Calu3 (cell line): ENCODE measurements at regions of chr1 and their contacts with region 1.

Region 1: DNA sequence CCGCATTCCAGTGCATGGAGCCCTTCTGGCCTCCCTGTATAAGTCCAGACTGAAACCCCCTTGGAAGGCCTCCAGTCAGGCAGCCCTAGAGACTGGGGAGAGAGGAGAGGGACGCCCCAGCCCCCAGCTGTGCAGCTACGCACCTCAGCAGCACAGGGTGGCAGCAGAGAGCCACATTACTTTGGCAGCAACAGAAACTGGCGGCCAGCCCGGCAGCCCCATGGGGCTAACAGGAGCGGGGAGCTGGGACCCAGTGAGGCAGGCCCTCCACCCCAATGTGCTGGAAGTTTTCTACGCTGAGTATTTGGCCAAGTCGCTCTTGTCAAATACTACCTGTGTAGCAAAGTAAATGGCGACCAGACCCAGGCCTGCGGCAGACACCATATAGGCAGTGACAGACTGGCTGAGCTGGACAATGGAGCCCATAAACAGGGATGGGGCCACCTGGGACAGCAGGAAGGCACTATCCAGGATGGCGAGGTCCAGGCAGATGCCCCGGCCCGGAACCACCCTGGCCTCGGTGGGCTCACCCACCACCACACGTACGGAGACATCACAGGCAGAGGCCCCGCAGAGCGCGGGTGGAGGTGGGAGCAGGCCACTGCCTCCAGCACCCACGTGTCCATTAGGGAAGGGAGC is 21.2 kb downstream of the SLC45A3 start:
- DNase-seq: peak; percentile 89
- H3K4me3 Mint-ChIP-seq: no peak overlapping the region
- H3K27ac Mint-ChIP-seq: no peak overlapping the region
- H3K4me1 Mint-ChIP-seq: peaks cover 35% of the 10 kb centered on the region
- H3K27me3 Mint-ChIP-seq: no peaks in the 10 kb centered on the region
- CTCF ChIP-seq: peak; percentile 82

Region 2: DNA sequence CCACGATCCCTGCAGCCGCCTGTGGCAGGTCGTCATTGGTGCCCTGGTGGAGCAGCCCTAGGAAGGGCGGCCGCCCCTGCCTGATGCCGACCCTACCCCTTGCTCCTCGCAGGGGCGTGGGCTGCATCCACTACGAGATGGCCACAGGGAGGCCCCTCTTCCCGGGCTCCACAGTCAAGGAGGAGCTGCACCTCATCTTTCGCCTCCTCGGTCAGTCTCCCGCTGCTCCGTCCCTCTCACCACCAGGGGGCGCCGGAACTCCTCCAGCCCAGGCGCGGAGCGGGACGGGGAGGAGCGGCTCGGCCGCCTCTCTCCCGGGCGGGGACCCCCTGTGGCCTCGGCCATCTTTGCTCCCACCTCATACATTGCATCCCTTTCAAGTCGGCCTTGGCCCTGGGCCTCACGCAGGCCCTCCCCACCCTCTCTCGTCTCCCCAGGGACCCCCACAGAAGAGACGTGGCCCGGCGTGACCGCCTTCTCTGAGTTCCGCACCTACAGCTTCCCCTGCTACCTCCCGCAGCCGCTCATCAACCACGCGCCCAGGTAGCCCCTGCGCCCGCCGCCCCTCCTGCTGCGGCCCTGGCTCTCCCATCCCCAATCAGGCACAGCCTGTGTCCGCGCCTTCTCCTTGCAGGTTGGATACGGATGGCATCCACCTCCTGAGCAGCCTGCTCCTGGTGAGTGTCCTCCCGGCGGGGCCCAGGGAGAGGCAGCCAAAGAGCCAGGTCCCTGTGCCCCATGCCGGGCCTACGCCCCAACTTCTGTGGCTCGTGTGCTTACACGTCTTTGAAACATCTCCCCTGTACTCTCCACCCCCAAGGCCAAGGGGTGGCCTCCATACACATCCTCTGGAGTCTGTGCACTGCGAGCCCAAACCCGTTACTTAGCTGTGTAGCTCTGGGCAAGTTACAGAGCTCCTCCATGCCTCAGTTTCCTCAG is 129.9 kb before region 1 on chr1:
- CTCF ChIA-PET with region 1: interaction called, 35 read pairs
- intact Hi-C with region 1: loop called (anchors 1 kb)
- DNase-seq: peak; percentile 95
- H3K4me3 Mint-ChIP-seq: peak overlapping the region; percentile 23
- H3K27ac Mint-ChIP-seq: peak overlapping the region; percentile 17
- H3K4me1 Mint-ChIP-seq: no peaks in the 10 kb centered on the region
- H3K27me3 Mint-ChIP-seq: no peaks in the 10 kb centered on the region
- CTCF ChIP-seq: peak; percentile 98

Region 3: DNA sequence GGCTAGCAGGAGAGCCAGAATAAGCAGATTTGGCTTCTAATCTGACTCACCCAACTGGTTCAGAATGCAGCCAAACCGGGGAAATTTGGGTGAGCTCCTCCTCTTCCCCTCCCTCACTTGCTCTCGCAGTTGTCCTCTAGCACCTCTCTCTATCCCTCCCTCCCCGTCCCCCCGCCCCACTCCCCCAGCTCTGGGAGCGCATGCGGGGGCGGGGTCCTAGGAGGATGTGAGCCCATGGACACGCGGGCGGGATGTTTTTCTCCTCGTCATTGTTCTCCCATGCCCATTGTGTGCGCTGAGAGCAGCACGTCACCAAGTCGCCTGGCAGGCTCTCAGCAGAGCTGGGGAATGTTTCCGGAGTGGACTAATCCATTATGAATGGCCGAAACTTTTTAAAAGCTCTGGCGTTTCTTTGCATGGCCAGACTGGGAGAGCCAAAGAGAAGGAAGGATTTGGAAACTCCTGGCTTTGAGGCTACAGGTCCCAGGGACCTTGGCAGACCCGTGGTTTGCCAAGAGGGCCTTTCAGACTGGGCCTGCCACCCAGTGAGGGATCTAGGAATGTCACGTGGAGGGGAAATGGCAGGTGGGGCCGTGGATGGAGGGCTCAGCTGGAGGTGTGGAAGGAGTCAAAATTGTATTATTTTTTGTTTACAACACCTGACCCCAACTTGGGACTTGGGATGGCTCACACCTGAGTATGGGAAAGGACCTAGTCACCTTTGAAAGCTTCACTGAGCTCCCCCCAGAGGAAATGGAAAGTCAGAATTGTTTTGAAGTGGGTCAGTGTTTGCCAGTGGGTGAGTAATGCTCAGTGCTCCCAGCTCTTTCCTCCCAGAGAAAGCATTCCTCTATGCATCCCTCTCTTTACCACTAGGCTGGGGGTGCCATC is 115.4 kb before region 1 on chr1:
- CTCF ChIA-PET with region 1: interaction called, 14 read pairs
- intact Hi-C with region 1: no loop called
- DNase-seq: peak; percentile 82
- H3K4me3 Mint-ChIP-seq: peak overlapping the region; percentile 63
- H3K27ac Mint-ChIP-seq: peak overlapping the region; percentile 83
- H3K4me1 Mint-ChIP-seq: peaks cover 27% of the 10 kb centered on the region
- H3K27me3 Mint-ChIP-seq: peaks cover 8% of the 10 kb centered on the region
- CTCF ChIP-seq: no peak

Region 4: DNA sequence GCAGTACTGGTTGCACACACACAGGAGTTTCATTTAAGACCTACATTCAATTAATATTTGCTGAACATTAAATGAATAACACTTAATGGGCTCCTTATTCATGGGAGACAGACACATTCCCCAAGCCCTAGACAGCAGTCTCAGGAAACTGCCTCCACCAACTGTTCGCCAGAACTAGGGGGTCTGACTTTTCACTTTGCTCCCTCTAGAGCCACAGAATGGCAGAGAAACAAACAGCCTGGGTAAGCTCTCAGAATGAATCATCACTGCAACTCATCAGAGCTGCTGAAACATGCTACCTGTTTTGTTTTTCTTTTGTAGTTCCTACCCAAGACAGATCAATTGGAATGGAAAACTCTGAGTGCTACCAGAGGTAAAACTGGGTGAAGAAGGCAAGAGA is 59.0 kb before region 1 on chr1:
- CTCF ChIA-PET with region 1: interaction called, 21 read pairs
- intact Hi-C with region 1: no loop called
- DNase-seq: no peak
- H3K4me3 Mint-ChIP-seq: peak overlapping the region; percentile 30
- H3K27ac Mint-ChIP-seq: peak overlapping the region; percentile 86
- H3K4me1 Mint-ChIP-seq: peaks cover 68% of the 10 kb centered on the region
- H3K27me3 Mint-ChIP-seq: no peaks in the 10 kb centered on the region
- CTCF ChIP-seq: no peak

Region 5: DNA sequence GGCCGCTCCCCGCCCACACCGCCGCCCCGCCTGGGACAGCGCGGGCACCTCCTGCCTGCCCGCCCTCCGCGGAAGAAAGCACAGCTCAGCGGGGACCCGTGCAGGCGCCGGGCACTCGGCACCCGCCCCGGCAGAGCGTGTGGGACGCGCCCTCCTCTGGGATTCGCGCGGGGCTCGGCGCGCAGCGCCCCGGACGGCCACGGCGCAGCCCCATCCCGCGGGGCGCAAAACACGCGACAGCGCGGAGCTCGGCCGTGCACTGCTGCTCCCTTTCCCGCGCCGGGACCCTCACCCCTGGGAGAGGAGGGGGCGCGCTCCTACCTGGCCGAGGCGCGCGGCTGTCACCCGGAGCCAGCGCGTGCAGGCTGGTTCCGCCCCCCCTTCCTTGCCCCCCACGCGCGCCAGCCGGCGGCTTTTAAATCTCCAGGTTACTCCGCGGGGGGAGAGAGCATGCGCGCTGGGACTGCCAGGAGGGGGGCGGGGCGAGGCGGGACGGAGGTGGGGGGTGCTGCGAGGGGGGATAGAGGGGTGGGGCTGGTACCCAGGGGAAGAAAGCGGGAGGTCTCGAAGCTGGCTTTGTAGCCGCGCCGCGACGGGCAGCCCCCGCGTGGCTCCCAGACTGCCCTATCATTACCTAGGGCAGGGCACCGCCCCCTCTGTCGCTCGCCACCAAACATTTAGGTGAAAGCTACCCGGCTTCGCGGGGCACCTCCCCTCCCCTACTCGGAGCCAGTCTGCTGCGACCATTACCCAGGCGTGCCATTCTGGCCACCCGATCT is 21.2 kb after region 1 on chr1 and contains the start of gene SLC45A3:
- CTCF ChIA-PET with region 1: interaction called, 10 read pairs
- intact Hi-C with region 1: no loop called
- DNase-seq: peak; percentile 51
- H3K4me3 Mint-ChIP-seq: peak within 1 kb of the TSS; percentile 91
- H3K27ac Mint-ChIP-seq: peak within 1 kb of the TSS; percentile 70
- H3K4me1 Mint-ChIP-seq: peaks cover 30% of the 10 kb centered on the region
- H3K27me3 Mint-ChIP-seq: no peaks in the 10 kb centered on the region
- CTCF ChIP-seq: no peak
- total RNA-seq, gene SLC45A3: 27.5 and 29.1 TPM in 2 replicates

Region 6: DNA sequence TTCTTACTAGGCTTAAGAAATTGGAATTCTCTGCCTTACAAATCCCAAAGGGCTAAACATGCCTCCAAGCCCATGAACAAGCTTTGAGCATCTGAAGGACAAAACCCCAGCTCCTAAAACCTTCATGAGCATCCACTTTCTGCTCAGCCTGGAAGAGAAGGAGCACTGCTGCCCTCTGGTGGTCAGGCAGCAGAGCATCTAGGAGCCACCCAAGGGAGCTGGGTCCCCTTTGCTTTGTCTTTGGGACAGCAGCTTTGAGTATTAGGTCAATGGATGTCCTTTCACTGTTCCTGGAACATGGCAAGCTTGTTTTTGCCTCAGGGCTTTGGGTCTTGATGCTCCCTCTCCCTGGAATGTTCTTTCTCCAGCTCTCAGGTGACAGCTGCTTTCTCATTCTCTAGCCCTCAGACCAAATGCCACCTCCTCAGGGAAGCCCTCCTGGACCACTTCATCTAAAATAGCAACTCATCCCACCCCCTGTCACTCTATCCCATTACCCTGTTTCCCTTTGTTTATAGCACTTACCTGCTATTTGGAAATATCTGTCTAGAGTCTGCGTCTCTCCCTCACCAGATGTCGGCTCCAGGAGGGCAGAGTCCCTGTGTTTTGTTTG is 318.4 kb after region 1 on chr1:
- CTCF ChIA-PET with region 1: interaction called, 10 read pairs
- intact Hi-C with region 1: no loop called
- DNase-seq: peak; percentile 91
- H3K4me3 Mint-ChIP-seq: no peak overlapping the region
- H3K27ac Mint-ChIP-seq: no peak overlapping the region
- H3K4me1 Mint-ChIP-seq: peaks cover 28% of the 10 kb centered on the region
- H3K27me3 Mint-ChIP-seq: no peaks in the 10 kb centered on the region
- CTCF ChIP-seq: peak; percentile 98